CD4-positive, alpha-beta memory T cell (primary cell): ENCODE measurements at regions of chr6 and their contacts with region 1.

Region 1: DNA sequence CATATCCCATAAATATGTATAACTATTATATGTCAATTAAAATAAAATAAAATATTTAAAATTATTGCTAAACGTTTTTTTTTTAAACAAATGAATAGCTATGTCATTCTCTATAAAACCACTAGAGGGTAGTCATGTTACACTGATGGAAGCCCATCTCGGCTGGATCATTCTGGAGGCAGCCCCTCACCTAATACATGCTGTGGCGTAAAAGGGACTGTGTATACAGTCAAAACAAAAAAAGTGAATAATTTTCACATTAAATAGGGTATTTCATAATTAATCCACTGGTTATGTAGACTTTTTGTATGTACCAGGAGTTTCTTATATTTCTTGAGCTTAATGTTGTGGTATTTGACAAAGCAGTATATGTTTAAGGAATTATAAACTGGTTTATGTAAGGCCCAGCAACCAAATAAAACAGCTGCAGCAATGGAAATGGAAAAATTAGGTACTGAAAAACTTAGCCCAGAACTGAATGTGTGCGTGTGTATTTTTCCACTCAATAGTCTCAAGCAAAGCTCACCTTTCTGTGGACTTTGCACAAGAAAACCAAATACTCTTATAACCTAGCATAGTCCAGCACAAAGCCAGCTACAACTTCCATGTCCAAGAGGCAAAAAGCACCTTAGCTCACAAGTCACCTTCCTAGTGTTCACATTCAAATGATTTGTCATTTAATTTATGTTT is 81.7 kb downstream of the COL9A1 start:
- DNase-seq: peak in 4 of 5 donors; percentile 0 to 25 (median 10)
- H3K4me3 ChIP-seq: no peak overlapping the region
- H3K4me3 Mint-ChIP-seq: no peak overlapping the region
- H3K27ac ChIP-seq: no peak overlapping the region
- H3K27ac Mint-ChIP-seq: no peak overlapping the region
- H3K4me1 ChIP-seq: no peaks in the 10 kb centered on the region
- H3K4me1 Mint-ChIP-seq: no peaks in the 10 kb centered on the region
- H3K27me3 ChIP-seq: no peaks in the 10 kb centered on the region
- H3K27me3 Mint-ChIP-seq: peaks cover 5 to 6% of the 10 kb centered on the region in 2 donors

Region 2: GRCh38 chr6:69988458-69989126 is 232.6 kb before region 1 on chr6:
- CTCF ChIA-PET with region 1: no interaction called
- POLR2A ChIA-PET with region 1: no interaction called
- intact Hi-C with region 1: no loop called
- DNase-seq: no peak
- H3K4me3 ChIP-seq: no peak overlapping the region
- H3K4me3 Mint-ChIP-seq: no peak overlapping the region
- H3K27ac ChIP-seq: no peak overlapping the region
- H3K27ac Mint-ChIP-seq: no peak overlapping the region
- H3K4me1 ChIP-seq: no peaks in the 10 kb centered on the region
- H3K4me1 Mint-ChIP-seq: no peaks in the 10 kb centered on the region
- H3K27me3 ChIP-seq: no peaks in the 10 kb centered on the region
- H3K27me3 Mint-ChIP-seq: peaks cover 0 to 1% of the 10 kb centered on the region in 2 donors

Region 3: GRCh38 chr6:70210462-70210861 is 10.7 kb before region 1 on chr6:
- CTCF ChIA-PET with region 1: interaction called, 13 read pairs
- POLR2A ChIA-PET with region 1: no interaction called
- intact Hi-C with region 1: no loop called
- DNase-seq: no peak
- H3K4me3 ChIP-seq: no peak overlapping the region
- H3K4me3 Mint-ChIP-seq: no peak overlapping the region
- H3K27ac ChIP-seq: no peak overlapping the region
- H3K27ac Mint-ChIP-seq: no peak overlapping the region
- H3K4me1 ChIP-seq: no peaks in the 10 kb centered on the region
- H3K4me1 Mint-ChIP-seq: no peaks in the 10 kb centered on the region
- H3K27me3 ChIP-seq: no peaks in the 10 kb centered on the region
- H3K27me3 Mint-ChIP-seq: peaks cover 2 to 10% of the 10 kb centered on the region in 2 donors

Region 4: GRCh38 chr6:70231311-70231710 is 10.1 kb after region 1 on chr6:
- CTCF ChIA-PET with region 1: interaction called, 47 read pairs
- POLR2A ChIA-PET with region 1: no interaction called
- intact Hi-C with region 1: no loop called
- DNase-seq: no peak
- H3K4me3 ChIP-seq: no peak overlapping the region
- H3K4me3 Mint-ChIP-seq: no peak overlapping the region
- H3K27ac ChIP-seq: no peak overlapping the region
- H3K27ac Mint-ChIP-seq: no peak overlapping the region
- H3K4me1 ChIP-seq: no peaks in the 10 kb centered on the region
- H3K4me1 Mint-ChIP-seq: no peaks in the 10 kb centered on the region
- H3K27me3 ChIP-seq: no peaks in the 10 kb centered on the region
- H3K27me3 Mint-ChIP-seq: peaks cover 0 to 1% of the 10 kb centered on the region in 2 donors

Region 5: DNA sequence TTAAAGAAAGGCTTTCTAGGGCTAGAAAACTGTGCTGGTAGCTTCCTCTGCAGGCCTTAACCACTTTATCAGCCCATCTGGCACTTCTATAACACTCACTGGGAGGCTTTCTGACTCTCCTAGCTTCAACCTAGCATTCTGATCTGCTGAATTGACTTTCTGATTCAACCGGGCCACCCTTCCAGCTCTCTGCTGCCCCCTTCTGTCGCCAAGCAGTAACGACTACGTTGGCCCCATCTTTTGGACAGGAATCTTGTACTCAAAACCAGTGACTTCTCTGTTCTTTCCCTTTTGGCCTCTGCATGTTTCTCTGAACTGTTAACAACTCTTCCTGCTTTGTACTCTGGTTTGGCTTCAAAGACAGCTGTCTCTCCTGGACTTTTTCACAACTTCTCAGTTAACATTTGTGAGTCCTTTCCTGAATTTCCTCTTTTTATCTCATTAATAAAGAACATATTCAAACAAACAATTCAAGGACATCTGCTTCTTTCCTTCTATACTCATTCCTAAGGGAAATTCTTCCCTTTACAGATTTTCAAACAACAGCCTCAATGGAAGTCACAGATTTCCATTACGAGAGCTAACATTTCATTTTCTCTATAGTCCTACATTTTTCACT is 148.3 kb after region 1 on chr6:
- CTCF ChIA-PET with region 1: interaction called, 22 read pairs
- POLR2A ChIA-PET with region 1: no interaction called
- intact Hi-C with region 1: loop called (anchors 2 kb)
- DNase-seq: peak; percentile 53 to 62 (median 58)
- H3K4me3 ChIP-seq: no peak overlapping the region
- H3K4me3 Mint-ChIP-seq: no peak overlapping the region
- H3K27ac ChIP-seq: no peak overlapping the region
- H3K27ac Mint-ChIP-seq: no peak overlapping the region
- H3K4me1 ChIP-seq: no peaks in the 10 kb centered on the region
- H3K4me1 Mint-ChIP-seq: no peaks in the 10 kb centered on the region
- H3K27me3 ChIP-seq: no peaks in the 10 kb centered on the region
- H3K27me3 Mint-ChIP-seq: peaks cover 6 to 16% of the 10 kb centered on the region in 2 donors

Region 6: DNA sequence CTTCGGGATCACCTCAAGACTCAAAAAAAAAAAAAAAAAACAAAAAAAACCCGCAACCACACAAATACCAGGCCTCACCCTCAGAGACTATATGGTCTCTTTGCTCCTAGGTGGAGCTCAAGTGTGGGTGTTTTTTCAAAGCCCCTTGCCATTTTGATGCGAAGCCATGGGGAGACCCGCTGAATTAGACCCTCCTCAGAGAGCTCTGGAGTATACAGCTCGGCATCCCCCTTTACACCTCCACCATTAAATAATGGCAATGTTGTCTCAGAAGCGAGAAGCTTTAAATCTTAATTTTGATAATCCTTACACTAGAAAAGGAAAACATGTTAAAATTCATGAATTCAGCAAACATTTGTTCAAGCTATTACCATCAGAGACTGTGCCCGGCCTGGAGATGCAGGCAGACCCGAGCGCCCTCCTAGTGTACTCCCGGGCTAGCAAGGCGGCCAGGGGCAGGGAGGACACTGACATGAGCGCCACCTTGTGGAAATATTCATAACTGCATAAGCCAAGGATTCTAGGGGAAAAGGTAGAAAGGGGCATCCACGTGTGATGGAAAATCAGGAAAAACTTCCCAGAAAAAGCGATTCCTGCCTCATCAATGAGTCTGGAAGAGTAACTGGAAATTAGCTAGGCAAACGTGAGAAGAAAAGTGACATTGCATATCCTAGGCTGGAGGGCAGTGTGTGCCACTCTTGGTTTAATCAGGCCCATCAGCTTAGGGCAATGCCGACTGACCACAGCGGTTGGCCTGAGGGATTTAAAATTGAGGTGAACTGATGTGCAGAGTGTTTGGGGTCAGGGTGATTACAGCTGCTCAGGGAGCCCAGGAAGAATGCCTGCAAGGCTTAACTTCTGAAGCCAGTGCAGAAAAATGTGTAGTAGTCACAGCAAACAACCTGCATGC is 663.2 kb after region 1 on chr6:
- CTCF ChIA-PET with region 1: interaction called, 10 read pairs
- POLR2A ChIA-PET with region 1: no interaction called
- intact Hi-C with region 1: loop called (anchors 2 kb)
- DNase-seq: peak; percentile 49 to 61 (median 55)
- H3K4me3 ChIP-seq: no peak overlapping the region
- H3K4me3 Mint-ChIP-seq: no peak overlapping the region
- H3K27ac ChIP-seq: no peak overlapping the region
- H3K27ac Mint-ChIP-seq: no peak overlapping the region
- H3K4me1 ChIP-seq: no peaks in the 10 kb centered on the region
- H3K4me1 Mint-ChIP-seq: no peaks in the 10 kb centered on the region
- H3K27me3 ChIP-seq: no peaks in the 10 kb centered on the region
- H3K27me3 Mint-ChIP-seq: peaks cover 10 to 14% of the 10 kb centered on the region in 2 donors

Region 7: GRCh38 chr6:71012866-71013469 is 791.8 kb after region 1 on chr6:
- CTCF ChIA-PET with region 1: interaction called, 4 read pairs
- POLR2A ChIA-PET with region 1: no interaction called
- intact Hi-C with region 1: loop called (anchors 2 kb)
- DNase-seq: peak in 4 of 5 donors; percentile 29 to 37 (median 32)
- H3K4me3 ChIP-seq: no peak overlapping the region
- H3K4me3 Mint-ChIP-seq: no peak overlapping the region
- H3K27ac ChIP-seq: no peak overlapping the region
- H3K27ac Mint-ChIP-seq: no peak overlapping the region
- H3K4me1 ChIP-seq: no peaks in the 10 kb centered on the region
- H3K4me1 Mint-ChIP-seq: no peaks in the 10 kb centered on the region
- H3K27me3 ChIP-seq: no peaks in the 10 kb centered on the region
- H3K27me3 Mint-ChIP-seq: peaks cover 16 to 22% of the 10 kb centered on the region in 2 donors